WTC11 (cell line): ENCODE measurements at regions of chr7 and their contacts with region 1.

Region 1: DNA sequence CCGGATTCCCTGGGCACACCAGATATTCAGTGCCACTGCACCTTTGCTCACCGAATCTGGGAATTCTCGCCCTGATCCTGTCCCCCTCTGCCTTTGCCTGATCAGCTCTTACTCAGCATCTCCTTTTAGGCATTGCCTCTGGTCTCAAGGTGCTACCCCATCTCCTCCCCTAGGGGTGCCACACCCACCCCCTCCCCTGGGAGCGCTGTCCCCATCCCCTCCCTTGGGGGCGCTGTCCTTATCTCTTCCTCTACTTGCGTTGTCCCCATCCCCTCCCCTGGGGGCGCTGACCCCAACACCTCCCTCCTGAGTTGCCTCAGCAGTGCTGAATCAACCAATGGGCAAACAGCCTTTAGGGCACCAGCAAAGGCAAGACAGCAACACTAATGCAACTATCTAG is 686.9 kb upstream of the FOXK1 start:
- DNase-seq: peak; percentile 91
- ATAC-seq: peak; percentile 96
- H3K4me3 Mint-ChIP-seq: no peak overlapping the region
- H3K27ac Mint-ChIP-seq: no peak overlapping the region
- H3K4me1 Mint-ChIP-seq: peaks cover 18% of the 10 kb centered on the region
- H3K27me3 Mint-ChIP-seq: no peaks in the 10 kb centered on the region
- CTCF ChIP-seq: peak; percentile 80

Region 2: DNA sequence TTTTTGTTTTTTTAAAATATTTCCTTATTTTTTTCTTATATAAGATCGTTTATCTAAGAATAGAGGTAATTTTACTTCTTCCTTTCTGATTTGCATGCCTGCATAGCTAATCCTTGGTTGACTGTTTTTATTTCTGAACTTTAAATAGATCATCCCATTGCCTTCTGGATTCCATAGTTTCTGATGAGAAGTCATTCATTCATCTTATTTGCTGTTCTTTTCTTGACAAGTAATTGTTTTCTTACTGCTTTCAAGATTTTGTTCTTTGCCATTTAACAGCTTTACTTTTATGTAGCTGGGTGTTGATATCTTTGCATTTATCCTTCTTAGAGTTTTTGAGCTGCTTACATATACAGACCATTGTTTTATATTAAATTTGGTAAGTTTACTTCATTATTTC is 256.2 kb before region 1 on chr7:
- CTCF ChIA-PET with region 1: no interaction called
- POLR2A ChIA-PET with region 1: no interaction called
- DNase-seq: no peak
- ATAC-seq: no peak
- H3K4me3 Mint-ChIP-seq: no peak overlapping the region
- H3K27ac Mint-ChIP-seq: no peak overlapping the region
- H3K4me1 Mint-ChIP-seq: peaks cover 4% of the 10 kb centered on the region; the same call in 1 of the 2 replicates
- H3K27me3 Mint-ChIP-seq: no peaks in the 10 kb centered on the region
- CTCF ChIP-seq: no peak

Region 3: GRCh38 chr7:3984456-3984855 is 10.7 kb before region 1 on chr7:
- CTCF ChIA-PET with region 1: interaction called, 20 read pairs
- POLR2A ChIA-PET with region 1: no interaction called
- DNase-seq: no peak
- ATAC-seq: no peak
- H3K4me3 Mint-ChIP-seq: no peak overlapping the region
- H3K27ac Mint-ChIP-seq: peak overlapping the region; percentile 45; the same call in 1 of the 2 replicates
- H3K4me1 Mint-ChIP-seq: peaks cover 13% of the 10 kb centered on the region
- H3K27me3 Mint-ChIP-seq: no peaks in the 10 kb centered on the region
- CTCF ChIP-seq: no peak

Region 4: DNA sequence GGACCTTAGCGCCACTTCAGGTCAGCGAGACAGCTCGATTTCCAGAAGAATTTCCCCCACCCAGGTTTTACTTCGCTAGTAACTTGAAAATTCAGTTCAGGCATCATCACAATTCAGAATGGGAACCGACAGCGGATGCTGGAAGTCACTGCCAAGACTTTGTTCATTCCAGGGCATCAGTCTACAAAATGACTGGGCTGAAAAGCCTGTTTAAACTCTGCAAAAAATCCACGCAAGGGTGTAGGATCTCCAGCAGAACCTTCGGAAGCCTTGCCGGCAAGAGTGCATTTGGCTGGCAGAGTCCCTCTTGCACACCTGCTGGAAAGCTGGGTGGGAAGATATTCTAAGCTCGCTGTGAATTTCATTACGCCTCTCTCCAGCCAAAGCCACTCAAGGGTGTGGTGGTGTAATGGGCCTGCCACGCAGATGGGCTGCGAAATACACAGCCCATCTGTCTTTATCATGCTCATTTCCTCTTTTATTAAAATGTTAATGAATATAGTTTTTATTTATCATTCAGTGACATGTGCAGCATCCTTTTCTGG is 14.9 kb after region 1 on chr7:
- CTCF ChIA-PET with region 1: interaction called, 14 read pairs
- POLR2A ChIA-PET with region 1: no interaction called
- DNase-seq: no peak
- ATAC-seq: no peak
- H3K4me3 Mint-ChIP-seq: no peak overlapping the region
- H3K27ac Mint-ChIP-seq: 0 out of 2 replicates have a peak overlapping the region, but pooled peaks have one; percentile 72
- H3K4me1 Mint-ChIP-seq: peaks cover 71% of the 10 kb centered on the region
- H3K27me3 Mint-ChIP-seq: no peaks in the 10 kb centered on the region
- CTCF ChIP-seq: no peak

Region 5: DNA sequence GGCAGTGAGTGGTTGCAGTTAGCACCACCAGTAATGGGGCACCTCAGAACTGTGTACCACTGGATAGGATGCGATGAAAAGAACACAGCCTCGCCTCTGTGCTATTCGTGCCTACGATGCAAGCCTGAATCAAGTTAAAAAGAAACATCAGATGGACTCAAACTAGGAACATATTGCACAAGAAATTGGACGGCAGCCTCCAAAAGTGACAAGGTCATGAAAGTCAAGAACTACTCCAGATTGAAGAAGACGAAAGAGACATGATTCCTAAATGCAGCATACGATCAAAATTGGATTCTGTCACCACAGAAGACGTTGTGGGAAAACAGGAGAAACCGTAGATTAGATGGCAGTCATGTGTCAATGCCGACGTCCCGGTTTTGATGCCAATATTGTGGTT is 38.8 kb after region 1 on chr7:
- CTCF ChIA-PET with region 1: no interaction called
- POLR2A ChIA-PET with region 1: no interaction called
- DNase-seq: no peak
- ATAC-seq: peak; percentile 36; the same call in 1 of the 2 replicates
- H3K4me3 Mint-ChIP-seq: no peak overlapping the region
- H3K27ac Mint-ChIP-seq: no peak overlapping the region; the same call in 1 of the 2 replicates
- H3K4me1 Mint-ChIP-seq: peaks cover 39% of the 10 kb centered on the region
- H3K27me3 Mint-ChIP-seq: no peaks in the 10 kb centered on the region
- CTCF ChIP-seq: no peak